ENCODE measurements at regions of chr22 and their contacts with region 1.

Region 1: DNA sequence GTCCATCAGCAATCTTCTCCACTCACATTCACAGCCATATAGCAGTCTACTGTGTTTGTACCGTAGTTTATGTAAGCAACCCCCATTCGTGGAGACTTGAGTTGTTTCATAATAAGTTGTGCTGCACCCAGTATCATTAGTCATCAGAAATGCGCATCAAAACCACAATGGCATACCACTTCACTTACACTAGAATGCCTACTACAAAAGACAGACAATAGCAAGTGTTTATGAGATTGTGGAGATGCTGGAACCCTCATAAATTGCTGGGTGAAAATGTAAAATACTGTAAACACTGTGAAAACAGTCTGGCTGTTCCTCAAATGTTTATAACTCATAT is 133.3 kb downstream of the ATXN10 start:
- DNase-seq: peak; percentile 95
- H3K4me3 Mint-ChIP-seq: no peak overlapping the region
- H3K27ac Mint-ChIP-seq: peak overlapping the region; percentile 31
- H3K4me1 Mint-ChIP-seq: peaks cover 32% of the 10 kb centered on the region
- H3K27me3 Mint-ChIP-seq: no peaks in the 10 kb centered on the region
- CTCF ChIP-seq: no peak

Region 2: DNA sequence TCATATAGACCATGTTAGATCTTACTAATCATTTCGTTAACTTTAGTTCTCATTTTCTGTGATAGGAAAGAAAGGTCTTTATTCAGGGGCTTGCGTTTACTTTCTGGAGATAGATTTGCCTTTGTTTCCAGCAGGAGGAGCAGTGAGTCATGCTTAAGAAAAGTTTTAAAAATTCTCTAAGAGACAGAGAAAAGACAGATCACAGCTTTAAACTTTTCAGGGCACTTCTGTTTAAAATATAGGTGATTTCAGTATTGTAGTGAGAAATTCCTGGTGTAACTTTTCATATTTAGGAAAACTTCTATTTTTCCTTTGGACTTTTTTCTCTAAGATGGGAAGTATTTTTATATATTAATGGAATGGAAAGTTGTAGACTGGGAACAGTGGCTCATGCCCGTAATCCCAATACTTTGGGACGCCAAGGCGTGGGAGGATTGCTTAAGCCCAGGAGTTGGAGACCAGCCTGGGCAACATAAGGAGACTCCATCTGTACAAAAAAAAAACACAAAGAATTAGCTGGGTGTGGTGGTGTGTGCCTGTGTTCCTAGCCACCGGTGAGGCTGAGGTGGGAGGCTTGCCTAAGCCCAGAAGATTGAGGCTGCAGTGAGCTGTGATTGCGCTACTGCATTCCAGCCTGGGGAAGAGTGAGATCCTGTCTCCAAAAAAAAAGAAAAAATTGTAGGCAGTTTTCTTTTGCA is 73.0 kb before region 1 on chr22:
- CTCF ChIA-PET with region 1: interaction called, 3 read pairs
- POLR2A ChIA-PET with region 1: interaction called, 3 read pairs
- intact Hi-C with region 1: loop called (anchors 1 kb)
- DNase-seq: peak; percentile 85
- H3K4me3 Mint-ChIP-seq: no peak overlapping the region
- H3K27ac Mint-ChIP-seq: peak overlapping the region; percentile 80
- H3K4me1 Mint-ChIP-seq: peaks cover 15% of the 10 kb centered on the region
- H3K27me3 Mint-ChIP-seq: no peaks in the 10 kb centered on the region
- CTCF ChIP-seq: peak; percentile 42

Region 3: GRCh38 chr22:45785458-45785857 is 19.5 kb before region 1 on chr22:
- CTCF ChIA-PET with region 1: no interaction called
- POLR2A ChIA-PET with region 1: interaction called, 14 read pairs
- intact Hi-C with region 1: no loop called
- DNase-seq: peak; percentile 85
- H3K4me3 Mint-ChIP-seq: peak overlapping the region; percentile 25
- H3K27ac Mint-ChIP-seq: peak overlapping the region; percentile 92
- H3K4me1 Mint-ChIP-seq: peaks cover 19% of the 10 kb centered on the region
- H3K27me3 Mint-ChIP-seq: no peaks in the 10 kb centered on the region
- CTCF ChIP-seq: no peak

Measured in MCF 10A (cell line).